ENCODE measurements at regions of chr2 and their contacts with region 1.

Region 1: DNA sequence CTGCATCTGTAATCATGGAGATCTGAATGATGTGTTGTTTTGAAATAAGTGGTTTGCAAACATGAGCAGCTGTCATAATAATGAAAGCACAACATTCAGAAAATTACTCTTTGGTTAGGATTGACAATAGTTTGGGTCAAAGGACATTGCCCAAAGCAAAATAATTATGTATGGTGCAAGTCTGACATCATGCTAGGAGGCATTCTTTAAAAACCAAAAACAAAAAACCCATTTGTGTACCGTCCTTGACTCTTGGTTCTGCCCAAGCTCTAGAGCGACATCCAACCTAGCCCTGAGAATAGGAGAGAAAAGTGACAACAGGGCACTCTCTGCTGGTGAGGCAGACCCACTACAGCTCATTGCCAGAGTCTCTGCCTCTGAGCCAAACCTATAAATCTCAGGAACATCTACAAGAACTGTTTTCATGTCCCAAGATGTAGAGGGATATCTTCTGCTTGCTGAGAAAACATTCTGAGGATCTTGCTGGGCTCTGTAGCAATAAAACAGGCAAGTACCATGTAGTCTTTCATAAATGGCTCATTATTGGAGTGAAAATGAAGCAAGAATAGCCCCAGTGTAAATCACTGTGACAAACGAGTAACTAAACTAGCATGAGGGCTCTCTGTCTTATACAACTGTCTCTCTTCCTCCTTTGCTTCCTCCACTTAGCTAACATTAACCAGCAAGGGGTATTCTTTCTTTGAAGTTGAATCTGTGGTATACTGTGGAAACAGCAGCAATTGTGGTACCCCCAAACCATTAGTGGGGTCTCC is 266.8 kb upstream of the CXCR4 start:
- DNase-seq: peak; percentile 41
- CTCF ChIP-seq: peak; percentile 77

Region 2: DNA sequence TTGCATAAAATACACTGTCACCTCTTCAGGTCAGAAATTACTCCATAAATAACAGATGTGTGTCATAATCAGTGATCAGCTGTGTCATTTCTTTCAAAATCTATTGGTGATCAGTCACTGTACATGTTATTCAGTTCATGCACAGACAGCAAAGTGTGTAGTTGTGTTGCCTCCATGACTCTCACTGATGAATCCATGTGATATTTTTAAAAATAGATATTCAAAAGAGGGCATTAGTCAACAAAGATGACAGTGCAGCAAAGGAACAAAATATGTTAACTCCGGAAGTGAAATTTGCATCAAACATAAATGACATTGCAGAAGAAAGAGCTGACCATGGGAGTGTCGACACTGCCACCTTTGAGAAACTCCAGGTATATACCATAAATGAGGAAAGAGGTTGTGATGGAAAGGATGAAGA is 491.3 kb before region 1 on chr2:
- CTCF ChIA-PET with region 1: interaction called, 10 read pairs
- POLR2A ChIA-PET with region 1: no interaction called
- DNase-seq: no peak
- CTCF ChIP-seq: no peak

Region 3: GRCh38 chr2:136402281-136402680 is 17.6 kb after region 1 on chr2:
- CTCF ChIA-PET with region 1: interaction called, 17 read pairs
- POLR2A ChIA-PET with region 1: no interaction called
- DNase-seq: no peak
- CTCF ChIP-seq: no peak

Region 4: DNA sequence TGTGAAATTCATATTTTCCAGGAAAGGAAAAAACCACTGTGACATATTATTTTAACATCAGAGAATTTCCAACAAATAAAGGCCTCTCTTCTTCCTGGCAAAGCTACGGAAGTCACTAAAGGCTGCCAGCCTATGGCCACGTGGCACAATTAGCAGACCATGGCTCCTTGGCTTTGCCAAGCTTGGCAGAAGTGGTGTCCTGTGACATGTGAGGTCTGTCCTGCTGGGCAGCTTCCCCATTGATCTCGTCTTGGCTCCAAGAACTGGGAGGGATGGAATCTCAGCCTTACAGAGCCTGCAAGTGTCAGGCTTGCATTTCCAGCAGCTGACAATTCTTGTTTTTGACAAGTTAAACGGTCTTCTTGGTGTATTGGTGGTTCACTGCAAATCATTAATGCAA is 153.8 kb after region 1 on chr2:
- CTCF ChIA-PET with region 1: no interaction called
- POLR2A ChIA-PET with region 1: no interaction called
- DNase-seq: no peak
- CTCF ChIP-seq: no peak

Measured in GM10248 (cell line).